Right ventricle myocardium inferior (tissue), 1 donor: ENCODE measurements at regions of chr1 and their contacts with region 1.

Region 1: GRCh38 chr1:72296481-72296880 is 14.1 kb upstream of the NEGR1 start:
- DNase-seq: no peak
- ATAC-seq: no peak

Region 2: DNA sequence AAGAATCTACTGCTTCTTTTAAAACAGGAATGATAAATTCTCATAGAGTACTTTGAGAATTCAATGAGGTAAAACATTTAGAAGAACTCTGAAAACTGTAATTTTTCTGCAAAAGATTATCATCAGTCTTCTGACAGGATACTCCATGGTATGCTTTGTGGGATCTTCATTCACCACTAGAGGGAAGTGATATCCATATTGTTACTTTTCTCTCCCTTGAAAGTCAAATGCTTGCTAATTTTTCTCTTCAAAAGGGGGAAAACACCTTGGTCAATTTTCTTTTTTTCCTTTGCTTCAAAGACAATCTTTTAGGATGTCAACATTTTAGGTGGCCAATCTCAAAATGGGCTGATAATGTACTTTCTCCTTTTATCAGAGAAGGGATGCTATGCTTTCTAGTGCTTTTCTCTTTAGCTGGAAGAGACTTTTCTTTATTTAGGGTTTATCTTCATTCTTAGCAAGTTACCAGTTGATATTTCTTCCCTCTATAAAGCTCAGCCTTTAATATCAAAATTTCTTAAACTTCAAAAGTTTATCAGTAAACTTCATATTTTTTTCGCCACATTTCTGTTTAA is 109.7 kb before region 1 on chr1:
- intact Hi-C with region 1: no loop called
- DNase-seq: no peak
- ATAC-seq: no peak

Region 3: DNA sequence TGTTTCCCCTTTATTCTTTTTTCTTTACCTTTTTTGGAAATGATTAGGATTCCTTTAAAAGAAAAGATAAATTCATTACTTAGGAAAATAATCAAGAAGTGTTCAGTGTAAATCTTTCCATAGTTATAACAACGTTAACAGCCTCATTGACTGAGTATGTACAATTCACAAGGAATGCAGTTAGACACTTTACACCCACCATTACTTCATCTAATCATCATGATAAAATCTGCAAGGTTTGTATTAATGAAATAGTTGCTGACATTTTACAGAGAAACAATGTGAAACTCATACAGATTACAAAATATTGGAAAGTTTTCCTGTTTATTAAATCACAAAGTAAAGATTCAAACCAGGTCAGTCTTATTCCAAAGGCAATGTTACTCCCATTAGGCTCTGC is 45.2 kb after region 1 on chr1:
- intact Hi-C with region 1: loop called (anchors 1 kb)
- DNase-seq: no peak
- ATAC-seq: no peak